Posterior vena cava (tissue), 2 donors: ENCODE measurements at regions of chr1 and their contacts with region 1.

Region 1: GRCh38 chr1:43414634-43415223 is 25.0 kb downstream of the SZT2 start:
- DNase-seq: no peak

Region 2: GRCh38 chr1:43227143-43227764 is 187.5 kb before region 1 on chr1:
- intact Hi-C with region 1: loop called (anchors 1 to 5 kb)
- DNase-seq: peak; percentile 93